HEK293 (cell line): ENCODE measurements at regions of chr16 and their contacts with region 1.

Region 1: GRCh38 chr16:1105888-1106620 is 10.0 kb upstream of the C1QTNF8 start:
- H3K4me3 ChIP-seq: no peak overlapping the region
- H3K27ac ChIP-seq: no peak overlapping the region
- H3K4me1 ChIP-seq: no peaks in the 10 kb centered on the region; the same call in 1 of the 2 replicates
- CTCF ChIP-seq: peak; percentile 84

Region 2: GRCh38 chr16:1026057-1026783 is 79.8 kb before region 1 on chr16:
- CTCF ChIA-PET with region 1: no interaction called
- POLR2A ChIA-PET with region 1: no interaction called
- H3K4me3 ChIP-seq: no peak overlapping the region
- H3K27ac ChIP-seq: no peak overlapping the region
- H3K4me1 ChIP-seq: no peaks in the 10 kb centered on the region
- CTCF ChIP-seq: no peak

Region 3: GRCh38 chr16:1196494-1196893 is 90.4 kb after region 1 on chr16:
- CTCF ChIA-PET with region 1: interaction called, 11 read pairs
- POLR2A ChIA-PET with region 1: no interaction called
- H3K4me3 ChIP-seq: no peak overlapping the region
- H3K27ac ChIP-seq: no peak overlapping the region
- H3K4me1 ChIP-seq: peaks cover 3% of the 10 kb centered on the region; the same call in 1 of the 2 replicates
- CTCF ChIP-seq: no peak